ENCODE measurements at regions of chr12 and their contacts with region 1.

Region 1: GRCh38 chr12:50504798-50505385 is at the start of gene DIP2B:
- DNase-seq: peak; percentile 95 to 96
- H3K4me3 ChIP-seq: peak within 1 kb of the TSS; percentile 85 to 94
- H3K27ac ChIP-seq: peak within 1 kb of the TSS; percentile 92 to 98
- H3K4me1 ChIP-seq: peaks cover 0 to 42% (median 25%) of the 10 kb centered on the region in 4 donors
- H3K27me3 ChIP-seq: no peaks in the 10 kb centered on the region
- CTCF ChIP-seq: peak; percentile 94 to 97

Region 2: GRCh38 chr12:50639721-50640120 is 134.8 kb after region 1 on chr12:
- intact Hi-C with region 1: loop called (anchors 1 kb)
- DNase-seq: no peak
- H3K4me3 ChIP-seq: no peak overlapping the region
- H3K27ac ChIP-seq: no peak overlapping the region
- H3K4me1 ChIP-seq: no peaks in the 10 kb centered on the region
- H3K27me3 ChIP-seq: no peaks in the 10 kb centered on the region
- CTCF ChIP-seq: no peak

Region 3: DNA sequence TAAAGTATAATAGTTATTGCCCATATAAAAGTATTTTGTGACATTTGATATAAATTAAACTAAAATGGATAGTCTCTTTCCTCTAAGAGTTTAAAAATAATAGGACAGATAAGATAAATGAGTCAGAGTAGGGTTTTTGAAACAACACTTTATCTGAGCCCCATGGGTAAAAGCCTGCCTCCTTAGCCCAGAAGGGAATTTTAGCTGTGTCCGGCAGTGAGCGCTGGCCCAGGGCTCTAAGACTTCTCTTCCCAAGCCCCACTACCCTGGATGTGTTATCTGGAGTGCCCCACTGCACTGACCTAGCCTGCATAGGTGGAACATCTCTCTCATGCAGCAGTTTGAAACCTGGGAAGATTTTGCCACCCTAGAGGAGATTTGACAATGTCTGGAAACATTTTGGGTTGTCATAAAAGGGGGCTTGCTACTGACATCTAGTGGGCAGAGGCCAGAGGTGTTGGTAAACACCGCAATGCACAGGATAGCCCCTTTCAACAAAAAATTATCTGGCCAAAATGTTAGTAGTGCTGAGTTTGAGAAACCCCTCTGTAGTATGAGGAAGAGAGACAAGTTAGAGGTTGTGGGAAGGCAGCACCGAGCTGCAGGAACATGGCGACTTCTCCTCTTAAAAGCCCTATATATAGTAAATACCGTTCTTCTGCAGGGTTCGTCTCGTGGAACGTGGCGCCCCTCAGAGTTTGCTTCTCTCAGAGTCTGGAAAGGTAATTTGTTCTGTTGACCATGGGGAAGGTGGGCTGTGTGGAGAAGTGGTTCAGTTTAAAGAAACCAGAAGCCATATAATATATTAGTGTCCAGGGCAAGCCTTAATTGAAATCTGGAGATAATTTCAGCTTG is 229.7 kb after region 1 on chr12:
- intact Hi-C with region 1: loop called (anchors 5 kb)
- DNase-seq: no peak
- H3K4me3 ChIP-seq: no peak overlapping the region
- H3K27ac ChIP-seq: no peak overlapping the region
- H3K4me1 ChIP-seq: no peaks in the 10 kb centered on the region
- H3K27me3 ChIP-seq: no peaks in the 10 kb centered on the region
- CTCF ChIP-seq: peak; percentile 21 to 34